MCF 10A (cell line): ENCODE measurements at regions of chr9 and their contacts with region 1.

Region 1: GRCh38 chr9:99140685-99141314 is 35.9 kb downstream of the TGFBR1 start:
- DNase-seq: peak; percentile 47
- H3K4me3 Mint-ChIP-seq: no peak overlapping the region
- H3K27ac Mint-ChIP-seq: no peak overlapping the region
- H3K4me1 Mint-ChIP-seq: peaks cover 5% of the 10 kb centered on the region
- H3K27me3 Mint-ChIP-seq: no peaks in the 10 kb centered on the region
- CTCF ChIP-seq: peak; percentile 87

Region 2: GRCh38 chr9:98860871-98861293 is 279.9 kb before region 1 on chr9:
- CTCF ChIA-PET with region 1: interaction called, 9 read pairs
- POLR2A ChIA-PET with region 1: no interaction called
- intact Hi-C with region 1: loop called (anchors 2 kb)
- DNase-seq: peak; percentile 86
- H3K4me3 Mint-ChIP-seq: no peak overlapping the region
- H3K27ac Mint-ChIP-seq: no peak overlapping the region
- H3K4me1 Mint-ChIP-seq: peaks cover 7% of the 10 kb centered on the region
- H3K27me3 Mint-ChIP-seq: peaks cover 26% of the 10 kb centered on the region
- CTCF ChIP-seq: peak; percentile 16

Region 3: GRCh38 chr9:98974994-98975712 is 165.6 kb before region 1 on chr9:
- CTCF ChIA-PET with region 1: interaction called, 43 read pairs
- POLR2A ChIA-PET with region 1: no interaction called
- intact Hi-C with region 1: loop called (anchors 1 kb)
- DNase-seq: peak; percentile 70
- H3K4me3 Mint-ChIP-seq: no peak overlapping the region
- H3K27ac Mint-ChIP-seq: no peak overlapping the region
- H3K4me1 Mint-ChIP-seq: no peaks in the 10 kb centered on the region
- H3K27me3 Mint-ChIP-seq: peaks cover 29% of the 10 kb centered on the region
- CTCF ChIP-seq: peak; percentile 93

Region 4: DNA sequence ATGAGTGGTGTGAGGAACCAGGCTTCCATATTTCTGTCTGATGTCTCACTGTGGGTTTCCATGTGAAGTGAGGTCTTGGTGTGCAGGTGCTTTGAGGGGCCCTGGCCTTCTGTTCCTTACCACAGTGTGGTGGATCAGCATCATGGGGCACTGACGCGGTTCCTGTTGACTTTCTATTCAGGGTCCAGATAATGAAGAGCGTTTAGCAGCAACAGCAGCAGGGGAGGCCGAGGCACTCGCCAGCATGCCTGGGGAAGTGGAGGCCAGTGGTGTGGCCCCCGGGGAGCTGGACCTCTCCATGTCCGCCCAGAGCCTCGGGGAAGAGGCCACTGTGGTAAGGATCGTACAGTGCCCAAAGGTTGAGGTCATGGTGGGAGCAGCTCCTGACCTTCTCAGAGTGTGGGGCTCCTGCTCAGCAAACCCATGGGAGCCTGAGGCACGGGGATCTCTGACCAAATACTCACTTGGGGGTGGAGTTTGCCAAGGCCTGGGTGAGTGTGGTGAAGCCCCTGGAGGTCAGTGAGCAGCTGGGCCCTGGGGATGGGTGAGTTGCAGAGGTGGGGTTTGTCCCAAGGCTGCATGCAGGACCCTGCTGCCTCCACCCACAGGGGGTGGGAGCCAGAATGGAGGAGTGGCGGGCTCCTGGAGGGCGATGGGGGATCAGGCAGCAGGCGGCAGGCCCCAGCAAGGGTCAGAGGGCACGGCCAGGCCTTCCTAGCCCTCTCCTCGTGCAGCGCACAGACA is 135.9 kb before region 1 on chr9:
- CTCF ChIA-PET with region 1: interaction called, 225 read pairs
- POLR2A ChIA-PET with region 1: interaction called, 3 read pairs
- intact Hi-C with region 1: loop called (anchors 1 kb)
- DNase-seq: no peak
- H3K4me3 Mint-ChIP-seq: no peak overlapping the region
- H3K27ac Mint-ChIP-seq: no peak overlapping the region
- H3K4me1 Mint-ChIP-seq: no peaks in the 10 kb centered on the region
- H3K27me3 Mint-ChIP-seq: peaks cover 32% of the 10 kb centered on the region
- CTCF ChIP-seq: no peak

Region 5: DNA sequence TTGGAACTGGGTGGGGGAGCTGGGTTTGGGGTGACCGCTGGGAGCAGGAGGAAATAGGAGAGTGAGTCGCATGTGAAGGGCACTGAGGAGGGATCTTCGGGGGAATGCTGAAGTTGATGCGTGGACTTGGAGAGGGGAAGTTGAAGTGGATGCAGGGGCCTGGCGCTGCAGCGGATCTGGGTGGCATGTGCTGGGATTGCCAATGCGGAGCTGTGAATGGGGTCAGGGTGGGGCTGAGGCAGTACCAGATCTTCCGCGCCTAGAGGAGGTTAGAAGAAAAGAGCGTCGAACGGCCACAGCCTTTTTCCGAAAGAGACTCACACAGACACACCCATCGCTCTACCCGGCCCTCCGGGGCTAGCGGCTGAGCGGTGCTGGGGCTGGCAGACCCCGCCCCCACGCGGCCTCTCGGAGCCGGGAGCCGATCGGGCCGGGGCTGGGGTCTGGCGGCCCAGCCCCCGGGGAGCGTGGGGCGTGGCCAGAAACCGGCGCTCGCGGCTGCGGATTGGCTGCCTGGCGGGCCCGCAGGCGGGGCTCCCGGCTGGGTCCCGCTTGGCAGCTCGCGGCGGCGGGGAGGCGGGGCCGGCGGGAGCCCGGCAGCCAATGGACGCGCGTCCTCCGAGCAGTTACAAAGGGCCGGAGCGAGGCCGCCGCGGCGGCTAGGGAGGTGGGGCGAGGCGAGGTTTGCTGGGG is 36.2 kb before region 1 on chr9 and contains the start of gene TGFBR1:
- CTCF ChIA-PET with region 1: interaction called, 24 read pairs
- POLR2A ChIA-PET with region 1: interaction called, 4 read pairs
- intact Hi-C with region 1: no loop called
- DNase-seq: peak; percentile 89
- H3K4me3 Mint-ChIP-seq: peak within 1 kb of the TSS; percentile 91
- H3K27ac Mint-ChIP-seq: peak within 1 kb of the TSS; percentile 88
- H3K4me1 Mint-ChIP-seq: peaks cover 45% of the 10 kb centered on the region
- H3K27me3 Mint-ChIP-seq: no peaks in the 10 kb centered on the region
- CTCF ChIP-seq: no peak
- total RNA-seq, gene TGFBR1: 27.6 and 29.4 TPM in 2 replicates

Region 6: GRCh38 chr9:99130069-99130468 is 10.7 kb before region 1 on chr9:
- CTCF ChIA-PET with region 1: interaction called, 10 read pairs
- POLR2A ChIA-PET with region 1: interaction called, 3 read pairs
- intact Hi-C with region 1: no loop called
- DNase-seq: no peak
- H3K4me3 Mint-ChIP-seq: no peak overlapping the region
- H3K27ac Mint-ChIP-seq: no peak overlapping the region
- H3K4me1 Mint-ChIP-seq: peaks cover 16% of the 10 kb centered on the region
- H3K27me3 Mint-ChIP-seq: no peaks in the 10 kb centered on the region
- CTCF ChIP-seq: no peak